ENCODE measurements at regions of chr7 and their contacts with region 1.

Region 1: DNA sequence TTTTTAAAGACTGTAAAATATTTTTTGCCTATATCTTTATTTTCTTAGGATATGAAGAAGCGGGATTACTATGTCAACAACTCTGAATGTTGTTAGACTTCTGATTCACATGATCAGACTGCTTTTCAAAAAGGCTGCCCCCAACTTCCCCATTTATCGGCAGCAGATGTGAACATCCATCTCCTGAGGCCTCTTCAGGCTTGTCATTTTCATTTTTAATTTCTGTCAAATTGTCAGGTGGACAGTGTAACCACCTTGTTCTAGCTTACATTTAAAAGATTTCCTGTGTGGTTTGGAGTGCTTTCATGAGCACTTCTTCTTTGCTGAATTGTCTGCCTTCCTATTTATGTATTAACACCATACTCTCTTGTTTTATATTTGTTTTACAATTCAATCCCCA is 78.8 kb upstream of the GSDME start:
- DNase-seq: no peak
- ATAC-seq: peak; percentile 79
- H3K4me3 Mint-ChIP-seq: peak overlapping the region; percentile 39
- H3K27ac Mint-ChIP-seq: peak overlapping the region; percentile 99
- H3K4me1 Mint-ChIP-seq: peaks cover 75% of the 10 kb centered on the region
- H3K27me3 Mint-ChIP-seq: no peaks in the 10 kb centered on the region
- CTCF ChIP-seq: no peak

Region 2: DNA sequence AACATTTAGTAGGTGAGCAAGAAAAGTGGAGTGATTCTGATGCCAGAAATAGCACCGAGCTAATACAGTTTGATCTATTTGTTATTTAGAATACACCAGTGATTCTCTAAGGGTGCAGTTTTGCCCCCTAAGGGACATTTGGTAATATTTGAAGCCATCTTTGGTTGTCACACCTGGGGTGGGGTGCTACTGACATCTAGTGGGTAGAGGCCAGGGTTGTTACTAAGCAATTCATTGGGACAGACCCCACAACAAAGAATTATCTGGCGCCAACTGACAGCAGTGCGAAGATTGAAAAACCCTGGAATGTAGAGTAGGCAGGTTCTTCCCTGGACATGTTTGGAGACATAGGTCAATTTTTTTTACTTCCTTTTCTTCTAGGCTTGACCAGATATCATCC is 248.2 kb before region 1 on chr7:
- CTCF ChIA-PET with region 1: no interaction called
- POLR2A ChIA-PET with region 1: no interaction called
- intact Hi-C with region 1: no loop called
- DNase-seq: no peak
- ATAC-seq: peak; percentile 62
- H3K4me3 Mint-ChIP-seq: no peak overlapping the region
- H3K27ac Mint-ChIP-seq: no peak overlapping the region
- H3K4me1 Mint-ChIP-seq: peaks cover 14% of the 10 kb centered on the region
- H3K27me3 Mint-ChIP-seq: no peaks in the 10 kb centered on the region
- CTCF ChIP-seq: no peak

Region 3: GRCh38 chr7:24757353-24758275 is 78.5 kb before region 1 on chr7 and contains the start of gene GSDME:
- CTCF ChIA-PET with region 1: no interaction called
- POLR2A ChIA-PET with region 1: no interaction called
- intact Hi-C with region 1: no loop called
- DNase-seq: peak; percentile 58
- ATAC-seq: peak; percentile 86
- H3K4me3 Mint-ChIP-seq: peak within 1 kb of the TSS; percentile 92
- H3K27ac Mint-ChIP-seq: peak within 1 kb of the TSS; percentile 55
- H3K4me1 Mint-ChIP-seq: peaks cover 25% of the 10 kb centered on the region
- H3K27me3 Mint-ChIP-seq: peaks cover 40% of the 10 kb centered on the region
- CTCF ChIP-seq: no peak
- total RNA-seq, gene GSDME: 3.1 and 4.1 TPM in 2 replicates

Region 4: DNA sequence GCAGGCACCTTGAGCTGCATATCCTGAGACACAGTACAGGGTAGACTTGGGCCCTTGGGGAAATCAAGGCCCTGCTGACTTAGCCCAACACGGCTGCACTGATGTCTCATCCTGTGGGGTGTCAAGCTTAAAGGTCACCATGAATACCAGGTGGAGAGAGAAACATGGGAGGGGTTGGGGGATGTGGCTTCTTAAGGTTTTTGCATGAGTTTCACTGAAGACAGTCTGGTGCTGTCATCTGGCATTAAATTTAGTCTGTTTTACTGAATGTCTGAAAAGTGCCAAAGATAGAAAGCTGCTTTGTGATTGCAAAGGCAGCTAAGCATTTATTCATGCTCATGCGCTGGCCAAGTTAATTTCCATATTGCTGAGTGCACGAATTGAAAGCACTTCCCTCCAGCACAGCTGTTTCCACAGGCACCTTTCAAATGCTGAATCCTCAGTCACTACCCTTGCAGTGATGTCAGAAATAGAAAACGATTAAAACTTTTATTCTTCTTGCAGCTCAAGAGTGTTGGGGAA is 41.8 kb after region 1 on chr7:
- CTCF ChIA-PET with region 1: no interaction called
- POLR2A ChIA-PET with region 1: interaction called, 16 read pairs
- intact Hi-C with region 1: loop called (anchors 1 kb)
- DNase-seq: no peak
- ATAC-seq: peak; percentile 90
- H3K4me3 Mint-ChIP-seq: peak overlapping the region; percentile 64
- H3K27ac Mint-ChIP-seq: peak overlapping the region; percentile 83
- H3K4me1 Mint-ChIP-seq: peaks cover 34% of the 10 kb centered on the region
- H3K27me3 Mint-ChIP-seq: no peaks in the 10 kb centered on the region
- CTCF ChIP-seq: no peak

Measured in activated B cell treated with CpG ODN at 0.5 μM for 24 hours (primary cell).